Ovary (tissue), 10 donors: ENCODE measurements at regions of chr6 and their contacts with region 1.

Region 1: GRCh38 chr6:126919947-126920346 is 198.5 kb upstream of the RSPO3 start:
- DNase-seq: no peak
- H3K4me3 ChIP-seq: no peak overlapping the region
- H3K27ac ChIP-seq: no peak overlapping the region
- H3K4me1 ChIP-seq: no peaks in the 10 kb centered on the region
- H3K27me3 ChIP-seq: no peaks in the 10 kb centered on the region
- CTCF ChIP-seq: no peak
- EP300 ChIP-seq: no peak
- POLR2A ChIP-seq: no peak

Region 2: GRCh38 chr6:126812651-126813050 is 107.3 kb before region 1 on chr6:
- intact Hi-C with region 1: no loop called
- DNase-seq: no peak
- H3K4me3 ChIP-seq: no peak overlapping the region
- H3K27ac ChIP-seq: no peak overlapping the region
- H3K4me1 ChIP-seq: no peaks in the 10 kb centered on the region
- H3K27me3 ChIP-seq: no peaks in the 10 kb centered on the region
- CTCF ChIP-seq: no peak
- EP300 ChIP-seq: no peak
- POLR2A ChIP-seq: no peak

Region 3: DNA sequence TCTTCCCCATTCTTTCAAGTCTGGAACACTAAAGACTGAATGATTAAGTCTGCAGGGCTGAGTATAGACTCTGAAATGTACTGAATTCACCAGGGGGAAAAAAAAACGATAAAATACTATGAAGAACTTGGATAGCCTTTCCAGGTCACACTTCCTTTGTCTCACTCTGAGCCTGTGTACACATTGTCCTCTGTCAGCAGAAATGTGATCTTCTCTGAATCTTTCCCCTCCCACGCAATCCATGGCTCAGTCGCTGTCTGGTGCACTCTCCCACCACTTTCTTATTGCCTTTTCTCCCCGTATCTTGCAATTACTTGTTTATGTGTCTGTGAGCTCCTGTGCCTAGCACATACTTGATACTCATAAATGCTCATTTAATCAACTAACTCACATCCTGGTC is 14.0 kb before region 1 on chr6:
- intact Hi-C with region 1: loop called in 1 of 4 experiments (anchors 1 kb)
- DNase-seq: no peak
- H3K4me3 ChIP-seq: no peak overlapping the region
- H3K27ac ChIP-seq: no peak overlapping the region
- H3K4me1 ChIP-seq: no peaks in the 10 kb centered on the region
- H3K27me3 ChIP-seq: no peaks in the 10 kb centered on the region
- CTCF ChIP-seq: no peak
- EP300 ChIP-seq: no peak
- POLR2A ChIP-seq: no peak